ENCODE measurements at regions of chr1 and their contacts with region 1.

Region 1: GRCh38 chr1:96580920-96581319 is 140.7 kb upstream of the PTBP2 start:
- DNase-seq: peak; percentile 36
- ATAC-seq: peak; percentile 96
- H3K4me3 Mint-ChIP-seq: peak overlapping the region; percentile 53
- H3K27ac Mint-ChIP-seq: peak overlapping the region; percentile 16; the same call in 1 of the 2 replicates
- H3K4me1 Mint-ChIP-seq: peaks cover 50% of the 10 kb centered on the region
- H3K27me3 Mint-ChIP-seq: no peaks in the 10 kb centered on the region
- CTCF ChIP-seq: no peak

Region 2: DNA sequence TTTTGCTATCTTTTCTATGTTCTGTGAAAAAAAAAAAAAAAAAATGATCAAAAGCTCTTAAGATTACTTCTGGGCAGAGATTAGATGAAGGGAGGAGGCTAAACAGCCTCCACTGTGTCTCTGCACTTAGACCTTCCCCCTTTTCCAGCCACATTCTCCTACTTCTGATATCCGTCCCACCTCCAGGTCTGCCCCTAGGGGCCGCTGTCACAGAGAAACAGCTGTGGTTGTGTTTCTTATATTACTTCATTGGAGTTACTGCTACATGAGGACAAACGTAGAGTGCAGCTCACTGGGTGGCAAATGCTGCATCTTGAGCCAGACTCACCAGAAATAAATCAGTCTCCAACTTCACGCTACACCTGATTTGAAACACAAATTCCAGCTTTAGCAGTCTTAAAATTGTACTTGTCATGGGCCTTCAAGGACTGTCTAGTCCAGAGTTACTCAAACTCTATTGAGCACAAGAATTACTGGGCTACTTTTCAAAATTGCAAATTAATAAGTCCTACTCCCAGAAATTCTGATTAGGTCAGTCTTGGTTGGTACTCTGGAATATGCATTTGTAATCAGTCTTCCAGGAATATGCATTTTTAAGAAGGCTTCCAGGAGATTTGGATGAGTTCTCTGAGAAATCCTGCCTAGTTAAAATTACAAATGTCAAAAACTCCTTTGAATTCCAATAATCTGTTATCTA is 15.5 kb after region 1 on chr1:
- CTCF ChIA-PET with region 1: interaction called, 25 read pairs
- POLR2A ChIA-PET with region 1: no interaction called
- DNase-seq: peak; percentile 76
- ATAC-seq: peak; percentile 96
- H3K4me3 Mint-ChIP-seq: no peak overlapping the region
- H3K27ac Mint-ChIP-seq: no peak overlapping the region
- H3K4me1 Mint-ChIP-seq: peaks cover 44% of the 10 kb centered on the region
- H3K27me3 Mint-ChIP-seq: no peaks in the 10 kb centered on the region
- CTCF ChIP-seq: peak; percentile 67